K562 (cell line): ENCODE measurements at regions of chr22 and their contacts with region 1.

Region 1: DNA sequence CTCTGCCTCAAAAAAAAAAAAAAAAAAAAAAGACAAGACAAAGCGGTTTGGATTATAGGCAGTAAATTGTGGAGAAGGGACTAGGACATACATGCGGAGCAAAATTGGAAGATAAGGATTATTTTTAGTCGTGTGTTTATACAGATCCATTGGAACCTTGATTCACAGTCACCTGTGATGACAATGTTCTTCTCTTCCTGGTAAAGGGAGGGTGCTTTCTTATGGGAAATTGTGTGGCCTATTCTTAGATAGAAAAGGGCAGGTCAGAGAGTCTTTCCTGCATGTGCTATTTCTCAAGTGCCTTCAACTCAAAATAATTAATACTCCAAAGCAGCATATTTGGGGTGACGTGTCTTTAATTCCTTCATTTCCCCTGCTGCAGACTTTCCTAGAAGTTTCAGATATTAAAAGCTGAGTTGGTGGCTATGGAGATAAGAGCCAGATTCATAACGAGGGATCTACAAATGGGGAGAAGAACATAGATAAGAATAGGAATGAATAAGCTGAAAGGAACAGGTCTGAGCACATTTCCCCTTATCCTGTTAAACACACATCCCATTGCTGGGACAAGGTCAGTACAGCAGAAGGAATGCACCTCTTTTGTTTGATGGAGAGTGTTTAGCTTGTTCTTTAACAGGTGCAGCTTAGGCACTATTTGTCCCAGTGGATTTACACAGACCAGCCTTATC is 22.5 kb downstream of the GSTT2B start:
- DNase-seq: peak; percentile 18 to 58 (median 43)
- ATAC-seq: no peak
- H3K4me3 ChIP-seq: no peak overlapping the region
- H3K27ac ChIP-seq: no peak overlapping the region
- H3K4me1 ChIP-seq: peaks cover 3 to 8% of the 10 kb centered on the region in 2 experiments; a peak in 4 of 5 replicates
- H3K27me3 ChIP-seq: no peaks in the 10 kb centered on the region
- CTCF ChIP-seq: no peak
- EP300 ChIP-seq: no peak
- POLR2A ChIP-seq: no peak
- RAD21 ChIP-seq: no peak

Region 2: GRCh38 chr22:23893943-23894709 is 44.3 kb before region 1 on chr22 and contains the start of gene MIF:
- CTCF ChIA-PET with region 1: no interaction called
- POLR2A ChIA-PET with region 1: no interaction called
- in situ Hi-C with region 1: no loop called
- intact Hi-C with region 1: no loop called
- DNase-seq: peak; percentile 92 to 95 (median 94)
- ATAC-seq: peak; percentile 90
- H3K4me3 ChIP-seq: peak within 1 kb of the TSS; percentile 77
- H3K27ac ChIP-seq: peak within 1 kb of the TSS; percentile 96
- H3K4me1 ChIP-seq: peaks cover 18 to 41% of the 10 kb centered on the region in 2 experiments
- H3K27me3 ChIP-seq: no peaks in the 10 kb centered on the region
- CTCF ChIP-seq: peak; percentile 69 to 82 (median 81)
- EP300 ChIP-seq: peak; percentile 35
- POLR2A ChIP-seq: peak; percentile 89
- RAD21 ChIP-seq: peak; percentile 8 to 39; a peak in 2 of 4 replicates
- polyA plus RNA-seq, gene MIF: 23.0 to 67.2 TPM

Region 3: GRCh38 chr22:23913661-23914353 is 24.7 kb before region 1 on chr22:
- CTCF ChIA-PET with region 1: no interaction called
- POLR2A ChIA-PET with region 1: no interaction called
- in situ Hi-C with region 1: no loop called
- intact Hi-C with region 1: no loop called
- DNase-seq: peak; percentile 86 to 93 (median 89)
- ATAC-seq: peak; percentile 99
- H3K4me3 ChIP-seq: peak overlapping the region; percentile 43
- H3K27ac ChIP-seq: peak overlapping the region; percentile 74
- H3K4me1 ChIP-seq: no peaks in the 10 kb centered on the region
- H3K27me3 ChIP-seq: no peaks in the 10 kb centered on the region
- CTCF ChIP-seq: no peak
- EP300 ChIP-seq: no peak
- POLR2A ChIP-seq: peak; percentile 79
- RAD21 ChIP-seq: no peak

Region 4: GRCh38 chr22:24005201-24005600 is 66.7 kb after region 1 on chr22 and contains the start of gene GSTT4:
- CTCF ChIA-PET with region 1: no interaction called
- POLR2A ChIA-PET with region 1: no interaction called
- in situ Hi-C with region 1: loop called (anchors 5 kb)
- intact Hi-C with region 1: no loop called
- DNase-seq: no peak
- ATAC-seq: no peak
- H3K4me3 ChIP-seq: no peak within 1 kb of the TSS
- H3K27ac ChIP-seq: no peak within 1 kb of the TSS
- H3K4me1 ChIP-seq: peaks cover 9 to 18% of the 10 kb centered on the region in 2 experiments; a peak in 4 of 5 replicates
- H3K27me3 ChIP-seq: no peaks in the 10 kb centered on the region
- CTCF ChIP-seq: no peak
- EP300 ChIP-seq: no peak
- POLR2A ChIP-seq: no peak
- RAD21 ChIP-seq: no peak
- polyA plus RNA-seq, gene GSTT4: not detected